Mammary epithelial cell (primary cell): ENCODE measurements at regions of chr3 and their contacts with region 1.

Region 1: DNA sequence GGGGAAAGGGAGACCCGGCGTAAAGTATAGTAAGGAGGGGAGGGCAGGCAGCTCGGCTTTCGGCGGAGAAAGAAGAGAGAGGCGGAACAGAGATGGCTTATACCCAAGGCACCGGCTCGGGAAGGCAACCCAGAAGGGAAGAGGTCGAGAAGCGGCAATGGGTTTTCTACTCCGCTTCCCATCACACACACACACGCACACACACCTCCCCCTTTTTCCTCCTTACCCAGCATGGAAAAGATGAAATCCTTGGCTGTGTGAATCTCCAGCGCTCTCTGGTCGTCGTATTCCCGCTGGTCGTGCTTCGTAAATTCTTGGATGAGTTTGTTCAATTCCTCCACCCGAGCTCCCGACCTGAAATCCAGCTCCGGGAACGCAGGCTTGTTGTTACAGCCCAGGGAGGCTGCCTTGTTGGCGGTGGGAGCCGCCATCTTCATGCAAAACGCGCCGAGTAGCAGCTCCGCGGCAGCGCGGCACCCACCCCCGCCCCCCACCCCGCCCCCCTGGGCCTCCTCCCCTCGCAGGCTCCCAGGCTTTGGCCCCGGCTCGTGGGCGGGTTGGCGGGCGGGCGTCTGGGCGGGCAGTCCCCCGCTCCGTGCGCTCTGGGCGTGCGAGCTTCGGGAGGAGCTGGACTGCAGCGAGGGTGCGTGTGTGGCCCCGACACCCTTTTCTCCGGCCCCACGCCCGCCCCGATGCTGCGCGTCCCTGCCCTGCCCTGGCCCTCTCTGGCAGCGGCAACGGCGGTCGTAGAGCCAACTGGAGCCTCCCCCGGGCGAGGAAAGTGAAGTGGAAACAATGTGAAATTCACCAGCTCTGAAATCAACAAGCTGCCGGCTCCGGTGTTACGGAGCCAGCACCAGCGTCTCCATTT is at the start of gene MB21D2:
- DNase-seq: peak; percentile 80
- H3K4me3 ChIP-seq: peak within 1 kb of the TSS; percentile 90 to 97 (median 91)
- H3K27ac ChIP-seq: peak within 1 kb of the TSS; percentile 83
- H3K4me1 ChIP-seq: peaks cover 14% of the 10 kb centered on the region
- H3K27me3 ChIP-seq: no peaks in the 10 kb centered on the region
- CTCF ChIP-seq: no peak
- total RNA-seq, gene MB21D2: 5.2 to 7.8 TPM

Region 2: DNA sequence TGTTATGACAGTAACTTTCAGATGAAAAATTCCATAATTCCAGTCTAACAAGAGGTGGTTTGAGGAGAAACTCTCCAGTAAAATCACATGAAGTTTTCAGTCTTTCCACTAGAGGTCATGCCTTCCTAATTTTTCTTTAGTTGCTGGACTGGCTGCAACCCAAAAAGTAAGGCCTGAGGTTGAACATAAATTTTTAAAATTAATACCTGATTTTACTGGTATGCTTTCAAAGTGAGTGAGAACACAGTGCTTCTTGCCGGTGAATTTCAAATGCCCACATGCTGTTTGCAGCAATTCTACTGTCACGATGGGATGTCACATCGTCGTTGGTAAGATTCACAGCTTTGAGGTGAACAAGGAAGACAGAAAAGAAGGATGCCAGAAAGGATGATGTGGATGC is 101.3 kb before region 1 on chr3:
- CTCF ChIA-PET with region 1: interaction called, 3 read pairs
- dilution Hi-C with region 1: no loop called
- in situ Hi-C with region 1: loop called in 1 of 2 experiments (anchors 10 kb)
- intact Hi-C with region 1: loop called (anchors 1 kb)
- DNase-seq: peak; percentile 47
- H3K4me3 ChIP-seq: no peak overlapping the region
- H3K27ac ChIP-seq: no peak overlapping the region
- H3K4me1 ChIP-seq: peaks cover 30% of the 10 kb centered on the region
- H3K27me3 ChIP-seq: no peaks in the 10 kb centered on the region
- CTCF ChIP-seq: peak; percentile 49 to 63

Region 3: GRCh38 chr3:192844836-192845525 is 72.7 kb before region 1 on chr3:
- CTCF ChIA-PET with region 1: no interaction called
- dilution Hi-C with region 1: loop called (anchors 5 kb)
- in situ Hi-C with region 1: no loop called
- intact Hi-C with region 1: loop called (anchors 1 kb)
- DNase-seq: peak; percentile 11
- H3K4me3 ChIP-seq: no peak overlapping the region
- H3K27ac ChIP-seq: no peak overlapping the region
- H3K4me1 ChIP-seq: peaks cover 4% of the 10 kb centered on the region
- H3K27me3 ChIP-seq: no peaks in the 10 kb centered on the region
- CTCF ChIP-seq: no peak

Region 4: GRCh38 chr3:192879336-192880106 is 38.1 kb before region 1 on chr3:
- CTCF ChIA-PET with region 1: no interaction called
- dilution Hi-C with region 1: no loop called
- in situ Hi-C with region 1: no loop called
- intact Hi-C with region 1: loop called (anchors 1 kb)
- DNase-seq: peak; percentile 95
- H3K4me3 ChIP-seq: peak overlapping the region in 2 of 3 experiments; percentile 12 to 28
- H3K27ac ChIP-seq: peak overlapping the region; percentile 85
- H3K4me1 ChIP-seq: peaks cover 22% of the 10 kb centered on the region
- H3K27me3 ChIP-seq: no peaks in the 10 kb centered on the region
- CTCF ChIP-seq: no peak

Region 5: DNA sequence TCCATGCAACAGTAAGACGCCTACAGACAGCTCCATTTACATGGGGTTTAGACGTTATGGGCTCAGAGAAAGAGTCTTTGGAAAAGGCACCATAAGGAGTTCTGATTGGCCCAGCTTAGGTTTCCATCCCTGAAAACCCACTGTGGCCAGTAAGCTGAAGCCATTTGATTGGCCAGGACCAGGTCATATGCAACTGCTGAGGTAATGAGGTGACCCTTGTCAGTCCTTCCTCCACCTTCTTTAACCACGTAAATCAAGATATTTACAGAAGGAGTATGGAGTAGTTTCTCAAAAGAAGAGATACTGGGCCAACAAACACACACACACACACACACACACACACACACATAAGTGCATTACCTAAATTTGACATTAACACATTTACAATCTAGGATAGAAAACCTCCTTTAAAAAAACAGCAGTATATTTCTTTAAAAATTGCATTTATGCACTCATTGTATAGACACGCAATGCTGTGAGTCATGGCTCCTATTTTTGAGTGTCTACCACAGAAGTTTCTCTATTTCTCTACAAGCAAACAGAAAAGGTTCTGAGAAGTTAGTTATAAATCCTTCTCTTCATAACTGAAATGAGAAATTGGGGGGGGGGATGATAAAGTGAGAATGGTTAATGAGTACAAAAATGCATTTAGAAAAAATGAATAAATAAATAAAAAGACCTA is 16.3 kb after region 1 on chr3:
- CTCF ChIA-PET with region 1: no interaction called
- dilution Hi-C with region 1: no loop called
- in situ Hi-C with region 1: no loop called
- intact Hi-C with region 1: loop called (anchors 2 kb)
- DNase-seq: peak; percentile 19
- H3K4me3 ChIP-seq: no peak overlapping the region
- H3K27ac ChIP-seq: no peak overlapping the region
- H3K4me1 ChIP-seq: peaks cover 8% of the 10 kb centered on the region
- H3K27me3 ChIP-seq: no peaks in the 10 kb centered on the region
- CTCF ChIP-seq: no peak

Region 6: GRCh38 chr3:193240850-193241706 is 323.4 kb after region 1 on chr3 and contains the start of gene PLAAT1:
- CTCF ChIA-PET with region 1: no interaction called
- dilution Hi-C with region 1: no loop called
- in situ Hi-C with region 1: no loop called
- intact Hi-C with region 1: no loop called
- DNase-seq: peak; percentile 46
- H3K4me3 ChIP-seq: peak within 1 kb of the TSS; percentile 51 to 61 (median 53)
- H3K27ac ChIP-seq: no peak within 1 kb of the TSS
- H3K4me1 ChIP-seq: peaks cover 5% of the 10 kb centered on the region
- H3K27me3 ChIP-seq: no peaks in the 10 kb centered on the region
- CTCF ChIP-seq: no peak
- total RNA-seq, gene PLAAT1: 0.56 to 1.3 TPM

Region 7: DNA sequence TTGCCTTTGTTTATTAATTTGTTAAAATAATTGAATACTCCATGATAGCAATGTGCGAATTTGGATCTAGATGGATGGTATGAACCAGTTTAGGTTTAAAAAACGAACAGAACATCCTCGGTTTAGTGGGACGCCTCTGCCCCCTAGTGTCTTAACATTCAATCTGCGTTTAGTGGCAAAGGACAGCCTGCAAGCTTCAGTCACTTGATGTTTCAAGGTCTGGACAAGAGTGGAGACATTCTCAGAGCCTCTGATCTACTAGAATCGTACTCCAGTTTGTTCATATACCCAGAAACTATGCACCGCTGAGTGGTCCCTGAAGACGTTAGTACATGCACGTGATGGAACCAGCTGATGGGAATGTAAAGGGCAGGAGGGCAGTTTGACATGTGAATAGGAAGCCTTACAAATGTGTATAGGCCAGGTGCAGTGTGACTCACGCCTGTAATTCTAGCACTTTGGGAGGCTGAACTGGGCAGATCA is 654.8 kb after region 1 on chr3:
- CTCF ChIA-PET with region 1: no interaction called
- dilution Hi-C with region 1: no loop called
- in situ Hi-C with region 1: no loop called
- intact Hi-C with region 1: loop called (anchors 5 kb)
- DNase-seq: peak; percentile 46
- H3K4me3 ChIP-seq: no peak overlapping the region
- H3K27ac ChIP-seq: no peak overlapping the region
- H3K4me1 ChIP-seq: no peaks in the 10 kb centered on the region
- H3K27me3 ChIP-seq: no peaks in the 10 kb centered on the region
- CTCF ChIP-seq: peak; percentile 83 to 86